ENCODE measurements at regions of chr1 and their contacts with region 1.

Region 1: GRCh38 chr1:212630158-212630900 is 21.8 kb downstream of the ATF3 start:
- DNase-seq: peak; percentile 51 to 59
- ATAC-seq: peak; percentile 87

Region 2: GRCh38 chr1:212477014-212477679 is 153.2 kb before region 1 on chr1:
- intact Hi-C with region 1: loop called in 1 of 2 experiments (anchors 5 kb)
- DNase-seq: peak; percentile 83 to 85
- ATAC-seq: peak; percentile 86

Region 3: GRCh38 chr1:212782422-212783154 is 152.3 kb after region 1 on chr1:
- intact Hi-C with region 1: no loop called
- DNase-seq: no peak
- ATAC-seq: peak; percentile 63

Region 4: DNA sequence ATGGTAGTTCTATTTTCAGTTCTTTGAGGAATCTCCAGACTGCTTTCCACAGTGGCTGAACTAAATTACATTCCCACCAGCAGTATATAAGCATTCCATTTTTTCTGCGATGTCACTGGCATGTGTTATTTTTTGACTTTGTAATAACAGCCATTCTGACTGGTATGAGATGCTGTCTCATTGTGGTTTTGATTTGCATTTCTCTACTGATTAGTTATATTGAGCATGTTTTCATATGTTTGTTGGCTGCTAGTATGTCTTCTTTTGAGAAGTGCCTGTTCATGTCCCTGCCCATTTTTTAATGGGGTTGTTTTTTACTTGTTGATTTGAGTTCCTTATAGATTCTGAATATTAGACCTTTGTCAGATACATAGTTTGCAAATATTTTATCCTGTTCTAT is 508.6 kb after region 1 on chr1:
- intact Hi-C with region 1: no loop called
- DNase-seq: no peak
- ATAC-seq: no peak